K562 (cell line): ENCODE measurements at regions of chr12 and their contacts with region 1.

Region 1: GRCh38 chr12:83016218-83016835 is 329.6 kb downstream of the TMTC2 start:
- DNase-seq: peak; percentile 14 to 80 (median 31)
- ATAC-seq: peak; percentile 94
- H3K4me3 ChIP-seq: no peak overlapping the region
- H3K27ac ChIP-seq: peak overlapping the region; percentile 89
- H3K4me1 ChIP-seq: peaks cover 0 to 20% of the 10 kb centered on the region in 2 experiments; a peak in 2 of 5 replicates
- H3K27me3 ChIP-seq: no peaks in the 10 kb centered on the region
- CTCF ChIP-seq: no peak
- EP300 ChIP-seq: peak; percentile 39; the same call in 1 of the 2 replicates
- POLR2A ChIP-seq: no peak
- RAD21 ChIP-seq: no peak

Region 2: GRCh38 chr12:83052890-83053541 is 36.7 kb after region 1 on chr12:
- CTCF ChIA-PET with region 1: no interaction called
- POLR2A ChIA-PET with region 1: no interaction called
- in situ Hi-C with region 1: no loop called
- intact Hi-C with region 1: loop called (anchors 5 kb)
- DNase-seq: peak; percentile 11 to 71 (median 26)
- ATAC-seq: peak; percentile 91
- H3K4me3 ChIP-seq: no peak overlapping the region
- H3K27ac ChIP-seq: peak overlapping the region; percentile 73
- H3K4me1 ChIP-seq: peaks cover 0 to 13% of the 10 kb centered on the region in 2 experiments; a peak in 2 of 5 replicates
- H3K27me3 ChIP-seq: no peaks in the 10 kb centered on the region
- CTCF ChIP-seq: no peak
- EP300 ChIP-seq: peak; percentile 70; the same call in 1 of the 2 replicates
- POLR2A ChIP-seq: no peak
- RAD21 ChIP-seq: no peak

Region 3: DNA sequence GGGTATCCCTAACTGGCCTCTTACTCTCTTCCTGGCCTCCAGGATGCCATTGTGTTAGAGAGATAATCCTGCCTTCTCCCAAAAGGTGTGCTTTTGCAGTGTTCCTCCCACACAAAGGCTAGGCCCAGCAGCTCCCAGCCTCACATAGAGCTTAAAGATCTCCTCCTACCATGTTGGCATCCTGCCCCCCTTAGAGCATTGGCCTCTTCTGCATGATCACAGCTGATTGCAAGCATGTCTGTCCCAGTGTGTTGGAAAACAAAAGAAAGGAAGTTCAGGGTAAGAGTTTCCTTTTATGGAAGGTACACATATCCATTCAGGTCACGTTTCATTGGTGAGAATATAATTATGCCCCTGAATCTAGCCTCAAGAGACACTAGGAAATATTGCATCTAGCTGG is 75.8 kb after region 1 on chr12:
- CTCF ChIA-PET with region 1: no interaction called
- POLR2A ChIA-PET with region 1: no interaction called
- in situ Hi-C with region 1: no loop called
- intact Hi-C with region 1: loop called (anchors 10 kb)
- DNase-seq: no peak
- ATAC-seq: no peak
- H3K4me3 ChIP-seq: no peak overlapping the region
- H3K27ac ChIP-seq: no peak overlapping the region
- H3K4me1 ChIP-seq: peaks cover 0 to 6% of the 10 kb centered on the region in 2 experiments; a peak in 3 of 5 replicates
- H3K27me3 ChIP-seq: no peaks in the 10 kb centered on the region
- CTCF ChIP-seq: no peak
- EP300 ChIP-seq: no peak
- POLR2A ChIP-seq: no peak
- RAD21 ChIP-seq: no peak

Region 4: GRCh38 chr12:83172866-83173649 is 156.7 kb after region 1 on chr12:
- CTCF ChIA-PET with region 1: no interaction called
- POLR2A ChIA-PET with region 1: no interaction called
- in situ Hi-C with region 1: no loop called
- intact Hi-C with region 1: loop called (anchors 10 kb)
- DNase-seq: peak; percentile 65 to 88 (median 76)
- ATAC-seq: peak; percentile 94
- H3K4me3 ChIP-seq: no peak overlapping the region
- H3K27ac ChIP-seq: peak overlapping the region; percentile 73
- H3K4me1 ChIP-seq: peaks cover 3 to 27% of the 10 kb centered on the region in 2 experiments; a peak in 4 of 5 replicates
- H3K27me3 ChIP-seq: no peaks in the 10 kb centered on the region
- CTCF ChIP-seq: no peak
- EP300 ChIP-seq: peak; percentile 99
- POLR2A ChIP-seq: no peak
- RAD21 ChIP-seq: peak in 1 of 2 experiments; percentile 18; a peak in 1 of 4 replicates

Region 5: GRCh38 chr12:84113666-84114065 is 1097.3 kb after region 1 on chr12:
- CTCF ChIA-PET with region 1: no interaction called
- POLR2A ChIA-PET with region 1: no interaction called
- in situ Hi-C with region 1: loop called (anchors 25 kb)
- intact Hi-C with region 1: no loop called
- DNase-seq: no peak
- ATAC-seq: no peak
- H3K4me3 ChIP-seq: no peak overlapping the region
- H3K27ac ChIP-seq: no peak overlapping the region
- H3K4me1 ChIP-seq: no peaks in the 10 kb centered on the region
- H3K27me3 ChIP-seq: no peaks in the 10 kb centered on the region
- CTCF ChIP-seq: no peak
- EP300 ChIP-seq: no peak
- POLR2A ChIP-seq: no peak
- RAD21 ChIP-seq: no peak